GM23248 (cell line): ENCODE measurements at regions of chr11 and their contacts with region 1.

Region 1: DNA sequence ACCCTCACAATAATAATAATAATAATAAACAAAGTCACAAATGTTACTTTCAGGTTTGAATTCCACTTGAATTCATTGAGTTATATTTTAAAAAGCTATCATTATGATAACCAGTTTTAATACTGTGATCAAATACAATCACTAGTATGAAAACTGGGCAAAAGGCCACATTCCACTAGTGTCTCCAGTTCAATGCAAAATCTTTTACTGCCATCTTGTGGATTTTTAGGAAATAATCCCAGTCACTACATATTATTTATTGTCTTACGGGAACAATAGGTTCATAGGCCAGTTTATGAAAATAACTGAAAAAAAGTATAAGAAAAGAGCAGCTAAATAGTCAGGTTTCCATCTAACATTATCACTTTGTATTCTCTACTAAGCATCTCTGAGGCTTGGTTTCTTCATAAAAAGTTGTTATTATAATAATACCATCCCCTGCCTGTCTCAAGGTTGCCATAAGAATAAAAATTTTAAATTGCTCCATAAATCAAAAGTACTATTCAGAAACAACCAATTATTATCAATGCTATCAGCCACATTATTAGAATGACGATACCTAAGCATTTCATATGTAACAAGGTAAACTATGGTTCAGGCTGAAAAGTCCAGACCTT is 533.9 kb upstream of the CCDC90B start:
- DNase-seq: peak; percentile 93
- H3K4me3 ChIP-seq: no peak overlapping the region
- H3K27ac ChIP-seq: no peak overlapping the region
- H3K4me1 ChIP-seq: peaks cover 21% of the 10 kb centered on the region
- H3K27me3 ChIP-seq: no peaks in the 10 kb centered on the region

Region 2: DNA sequence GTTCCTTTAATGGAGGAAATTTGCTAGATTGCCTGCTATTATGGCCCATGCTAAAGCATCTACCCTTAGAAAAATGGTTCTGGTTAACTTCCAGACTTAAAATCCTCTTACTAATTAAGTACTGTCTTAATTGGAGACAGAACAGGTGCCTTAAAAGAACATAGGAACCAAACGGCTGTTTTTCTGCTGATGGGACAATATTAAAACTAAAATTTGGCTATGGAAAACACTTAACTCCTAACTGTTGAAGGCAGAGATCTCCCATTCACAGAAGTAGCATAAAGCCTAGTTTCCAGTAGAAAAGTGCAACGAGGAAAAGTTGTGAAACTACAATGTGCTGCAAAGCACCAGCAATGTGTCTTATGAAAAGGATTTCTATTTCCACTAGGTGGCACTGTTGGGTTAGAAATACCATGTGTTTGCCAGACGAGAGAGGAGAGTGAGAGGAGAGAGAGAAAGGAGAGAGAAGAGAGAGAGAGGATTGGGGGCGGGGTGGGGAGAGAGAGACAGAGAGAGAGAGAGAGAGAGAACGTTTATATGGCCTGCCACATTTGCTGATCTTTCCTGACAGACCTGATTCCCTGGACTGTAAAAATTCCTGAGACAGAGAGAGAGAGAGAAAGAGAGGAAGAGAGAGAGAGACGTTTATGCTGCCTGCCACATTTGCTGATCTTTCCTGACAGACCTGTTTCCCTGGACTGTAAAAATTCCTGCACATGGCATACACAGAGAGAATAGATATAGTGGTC is 1137.9 kb before region 1 on chr11:
- in situ Hi-C with region 1: loop called (anchors 25 kb)
- DNase-seq: peak; percentile 69
- H3K4me3 ChIP-seq: no peak overlapping the region
- H3K27ac ChIP-seq: no peak overlapping the region
- H3K4me1 ChIP-seq: no peaks in the 10 kb centered on the region
- H3K27me3 ChIP-seq: peaks cover 29% of the 10 kb centered on the region

Region 3: DNA sequence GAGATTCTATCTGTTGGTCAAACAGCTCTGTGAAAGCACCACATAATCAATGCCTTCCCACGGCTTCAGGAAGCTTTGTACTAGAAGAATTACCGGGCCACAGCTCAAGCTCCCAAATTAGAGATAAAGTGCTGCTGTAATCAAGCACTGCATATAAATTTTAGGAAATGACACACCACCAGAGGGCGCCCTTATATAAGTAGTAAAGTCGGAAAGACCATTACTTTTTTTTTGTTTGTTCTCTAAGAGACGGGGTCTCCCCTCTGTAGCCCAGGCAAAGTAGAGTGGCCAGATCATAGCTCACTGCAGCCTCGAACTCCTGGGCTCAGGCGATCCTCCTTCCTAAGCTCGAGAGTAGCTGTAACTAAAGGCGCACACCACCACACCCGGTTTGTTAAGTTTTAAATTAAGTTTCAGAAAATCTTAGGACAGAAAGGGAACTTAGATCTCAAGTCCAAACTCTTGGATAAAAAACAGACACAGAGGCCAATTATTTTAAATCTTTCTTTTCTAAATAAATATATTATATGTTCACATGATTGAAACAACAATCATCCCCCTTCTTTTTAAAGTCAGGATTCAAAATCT is 952.5 kb before region 1 on chr11:
- in situ Hi-C with region 1: loop called (anchors 25 kb)
- DNase-seq: peak; percentile 85
- H3K4me3 ChIP-seq: peak overlapping the region; percentile 68
- H3K27ac ChIP-seq: no peak overlapping the region
- H3K4me1 ChIP-seq: peaks cover 19% of the 10 kb centered on the region
- H3K27me3 ChIP-seq: no peaks in the 10 kb centered on the region

Region 4: GRCh38 chr11:83292709-83293456 is 527.2 kb before region 1 on chr11:
- in situ Hi-C with region 1: loop called (anchors 10 kb)
- DNase-seq: peak; percentile 93
- H3K4me3 ChIP-seq: peak overlapping the region; percentile 51; the same call in 1 of the 2 replicates
- H3K27ac ChIP-seq: no peak overlapping the region
- H3K4me1 ChIP-seq: no peaks in the 10 kb centered on the region
- H3K27me3 ChIP-seq: no peaks in the 10 kb centered on the region